Motor neuron (in vitro differentiated cells): ENCODE measurements at regions of chr10 and their contacts with region 1.

Region 1: GRCh38 chr10:9302120-9302746 is 1247.7 kb downstream of the GATA3 start:
- ATAC-seq: peak in 3 of 8 experiments; percentile 48 to 68 (median 53)
- H3K4me3 ChIP-seq: no peak overlapping the region
- H3K27ac ChIP-seq: no peak overlapping the region
- H3K4me1 ChIP-seq: no peaks in the 10 kb centered on the region

Region 2: DNA sequence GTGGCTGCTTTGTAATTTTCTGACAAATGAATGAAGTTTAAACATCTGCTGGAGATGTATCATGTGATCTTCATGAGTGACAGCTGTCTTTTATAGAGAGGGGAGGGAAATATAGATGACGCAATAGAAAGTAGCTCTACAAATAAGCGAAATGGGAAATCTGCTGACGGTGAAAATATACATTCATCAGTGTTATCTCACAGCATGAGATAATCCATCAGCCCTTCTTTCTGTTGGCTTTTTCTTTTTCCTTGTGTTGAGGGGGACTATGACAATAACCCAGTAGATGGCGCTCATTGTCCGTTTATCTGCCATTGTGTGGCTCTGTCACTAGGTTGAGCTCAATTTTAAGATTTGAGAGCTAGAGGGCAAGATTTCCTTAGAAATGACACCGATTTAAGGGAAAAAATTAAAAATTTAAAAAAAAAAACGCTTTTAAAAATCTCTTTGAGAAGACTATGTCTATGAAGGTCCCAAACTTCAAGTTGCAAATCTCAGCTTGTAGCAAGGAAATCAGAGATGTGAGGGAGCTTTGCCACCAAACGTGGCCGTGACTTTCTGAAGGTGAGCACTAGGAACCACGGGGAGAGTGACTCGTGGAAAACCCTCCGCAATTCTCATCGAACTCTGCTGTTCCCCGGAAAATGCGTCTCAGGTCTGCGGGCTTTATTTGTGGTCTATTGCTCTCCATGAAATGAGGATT is 1776.8 kb before region 1 on chr10:
- in situ Hi-C with region 1: loop called in 5 of 9 experiments (anchors 25 kb)
- ATAC-seq: peak; percentile 85 to 96 (median 92)
- H3K4me3 ChIP-seq: no peak overlapping the region
- H3K27ac ChIP-seq: no peak overlapping the region
- H3K4me1 ChIP-seq: no peaks in the 10 kb centered on the region

Region 3: DNA sequence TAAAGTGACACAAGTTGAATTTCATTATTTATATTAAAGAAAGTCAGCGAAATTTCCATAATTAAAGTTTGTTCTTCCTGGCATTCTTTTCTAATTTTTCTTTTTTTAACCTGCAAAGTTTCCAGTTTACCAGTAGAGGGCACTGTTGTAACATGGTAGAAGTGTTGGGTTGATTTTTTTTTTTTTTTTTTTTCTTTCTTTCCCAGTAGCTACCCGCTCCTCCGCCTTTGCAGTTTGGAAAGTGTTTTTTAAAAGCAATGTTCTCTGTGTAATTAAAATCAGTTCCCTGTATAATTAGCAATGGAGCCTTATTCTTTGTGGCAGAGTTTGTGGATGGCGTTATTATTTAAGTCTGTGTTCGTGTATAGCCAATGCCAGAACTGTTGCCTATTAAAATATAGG is 1430.2 kb before region 1 on chr10:
- in situ Hi-C with region 1: loop called in 1 of 9 experiments (anchors 25 kb)
- ATAC-seq: no peak
- H3K4me3 ChIP-seq: peak overlapping the region in 1 of 5 donors; percentile 15
- H3K27ac ChIP-seq: no peak overlapping the region
- H3K4me1 ChIP-seq: no peaks in the 10 kb centered on the region